ENCODE measurements at regions of chr15 and their contacts with region 1.

Region 1: DNA sequence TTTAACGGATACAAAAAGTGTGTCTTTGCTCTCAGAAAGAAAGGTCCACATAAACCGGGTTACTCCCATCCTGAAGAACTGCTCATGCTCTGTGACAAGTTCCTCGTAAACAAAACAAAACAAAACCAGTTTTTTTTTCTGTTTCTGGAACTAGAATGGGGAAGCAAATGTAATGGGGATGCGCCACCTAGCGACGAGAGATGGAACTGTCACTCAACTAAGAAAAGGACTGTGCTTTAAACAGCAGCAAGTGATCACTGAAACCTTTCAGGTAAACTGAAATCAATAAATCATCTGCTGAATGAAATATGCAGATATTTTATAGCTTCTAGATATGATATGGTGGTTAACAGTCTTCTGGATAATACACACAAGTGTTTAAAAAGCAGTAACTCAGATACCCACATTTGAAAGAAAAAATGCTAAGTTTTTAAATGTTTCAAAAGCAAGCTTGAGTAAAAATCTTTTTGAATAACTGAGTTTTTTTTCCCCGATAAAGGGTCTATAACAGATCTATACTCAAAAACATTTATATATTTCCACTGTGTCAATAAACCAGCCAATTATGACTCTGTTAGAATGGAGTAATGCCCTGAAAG is 10.9 kb downstream of the TM2D3 start:
- DNase-seq: peak; percentile 42
- ATAC-seq: peak; percentile 69; the same call in 1 of the 2 replicates
- H3K4me3 ChIP-seq: no peak overlapping the region
- H3K27ac ChIP-seq: no peak overlapping the region
- H3K4me1 ChIP-seq: peaks cover 0 to 7% of the 10 kb centered on the region in 2 experiments; a peak in 2 of 4 replicates
- H3K27me3 ChIP-seq: no peaks in the 10 kb centered on the region
- CTCF ChIP-seq: peak; percentile 74 to 98 (median 89)
- POLR2A ChIP-seq: no peak
- RAD21 ChIP-seq: peak; percentile 89

Region 2: GRCh38 chr15:101232677-101233076 is 408.6 kb before region 1 on chr15:
- CTCF ChIA-PET with region 1: no interaction called
- POLR2A ChIA-PET with region 1: no interaction called
- RAD21 ChIA-PET with region 1: no interaction called
- intact Hi-C with region 1: no loop called
- DNase-seq: no peak
- ATAC-seq: no peak
- H3K4me3 ChIP-seq: no peak overlapping the region
- H3K27ac ChIP-seq: no peak overlapping the region
- H3K4me1 ChIP-seq: no peaks in the 10 kb centered on the region
- H3K27me3 ChIP-seq: no peaks in the 10 kb centered on the region
- CTCF ChIP-seq: no peak
- POLR2A ChIP-seq: no peak
- RAD21 ChIP-seq: no peak

Region 3: DNA sequence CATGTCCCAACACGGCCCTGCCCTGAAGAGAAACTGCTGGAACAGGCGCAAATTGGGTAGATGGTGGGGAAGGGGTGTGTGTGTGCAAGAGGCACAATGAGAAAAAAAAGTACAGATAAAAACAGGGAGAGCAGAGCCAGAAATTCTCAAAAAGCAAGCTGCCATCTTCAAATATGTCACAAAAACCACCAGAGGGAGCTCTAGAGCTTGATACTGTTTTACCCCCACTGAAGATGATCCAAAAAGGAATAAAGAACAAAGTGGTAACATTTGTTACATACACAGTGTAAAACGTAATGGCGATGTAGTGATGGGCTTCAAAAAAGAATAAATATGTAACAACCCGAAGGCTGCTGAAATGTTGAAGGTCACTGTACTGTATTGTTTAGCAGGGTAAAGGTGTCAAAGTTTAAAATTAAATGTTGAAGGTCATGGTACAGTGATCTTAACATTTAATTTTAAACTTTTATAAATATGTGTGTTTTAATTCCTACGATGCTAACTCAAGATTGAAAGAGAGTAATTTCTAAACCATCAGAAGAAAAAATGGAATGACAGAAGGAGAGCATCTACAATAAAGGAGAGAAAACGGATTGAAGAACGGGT is 352.3 kb before region 1 on chr15:
- CTCF ChIA-PET with region 1: interaction called, 20 read pairs
- POLR2A ChIA-PET with region 1: no interaction called
- RAD21 ChIA-PET with region 1: no interaction called
- intact Hi-C with region 1: loop called (anchors 1 kb)
- DNase-seq: peak; percentile 42
- ATAC-seq: peak; percentile 63
- H3K4me3 ChIP-seq: no peak overlapping the region
- H3K27ac ChIP-seq: no peak overlapping the region
- H3K4me1 ChIP-seq: peaks cover 15 to 30% of the 10 kb centered on the region in 2 experiments
- H3K27me3 ChIP-seq: no peaks in the 10 kb centered on the region
- CTCF ChIP-seq: peak; percentile 41 to 78 (median 64); a peak in 5 of 6 replicates
- POLR2A ChIP-seq: no peak
- RAD21 ChIP-seq: peak; percentile 50

Region 4: GRCh38 chr15:101294731-101295606 is 346.3 kb before region 1 on chr15 and contains the start of gene SNRPA1:
- CTCF ChIA-PET with region 1: interaction called, 20 read pairs
- POLR2A ChIA-PET with region 1: no interaction called
- RAD21 ChIA-PET with region 1: no interaction called
- intact Hi-C with region 1: loop called (anchors 1 kb)
- DNase-seq: peak; percentile 83
- ATAC-seq: peak; percentile 83
- H3K4me3 ChIP-seq: peak within 1 kb of the TSS; percentile 57 to 96
- H3K27ac ChIP-seq: peak within 1 kb of the TSS; percentile 96
- H3K4me1 ChIP-seq: peaks cover 15 to 33% of the 10 kb centered on the region in 2 experiments
- H3K27me3 ChIP-seq: no peaks in the 10 kb centered on the region
- CTCF ChIP-seq: no peak
- POLR2A ChIP-seq: peak; percentile 83
- RAD21 ChIP-seq: no peak
- total RNA-seq, gene SNRPA1: 104 TPM

Region 5: DNA sequence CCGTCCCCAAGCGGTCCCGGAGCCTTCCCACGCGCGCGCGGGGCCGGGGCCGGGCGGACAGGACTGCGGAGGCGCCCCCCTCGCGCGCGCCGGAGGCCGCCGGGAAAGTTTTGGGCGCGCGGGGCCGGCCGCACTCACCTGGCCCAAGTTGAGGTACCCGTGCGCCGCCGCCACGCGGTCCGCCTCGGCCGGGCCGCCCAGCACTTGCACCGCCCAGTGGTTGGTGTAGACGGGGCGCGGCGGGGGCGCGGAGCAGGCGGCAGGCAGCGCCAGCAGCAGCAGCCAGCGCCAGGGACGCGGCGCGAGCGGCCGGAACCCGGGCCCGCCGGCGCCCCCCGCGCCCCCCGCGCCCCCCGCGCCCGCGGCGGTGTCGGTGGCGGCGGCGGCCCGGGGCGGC is 152.0 kb before region 1 on chr15:
- CTCF ChIA-PET with region 1: no interaction called
- POLR2A ChIA-PET with region 1: no interaction called
- RAD21 ChIA-PET with region 1: no interaction called
- intact Hi-C with region 1: loop called (anchors 5 kb)
- DNase-seq: peak; percentile 18
- ATAC-seq: peak; percentile 83
- H3K4me3 ChIP-seq: peak overlapping the region; percentile 55 to 63; a peak in 3 of 4 replicates
- H3K27ac ChIP-seq: peak overlapping the region; percentile 32; the same call in 1 of the 2 replicates
- H3K4me1 ChIP-seq: peaks cover 6 to 25% of the 10 kb centered on the region in 2 experiments; a peak in 3 of 4 replicates
- H3K27me3 ChIP-seq: no peaks in the 10 kb centered on the region
- CTCF ChIP-seq: no peak
- POLR2A ChIP-seq: no peak
- RAD21 ChIP-seq: no peak

Region 6: GRCh38 chr15:101501703-101502373 is 139.4 kb before region 1 on chr15:
- CTCF ChIA-PET with region 1: no interaction called
- POLR2A ChIA-PET with region 1: no interaction called
- RAD21 ChIA-PET with region 1: no interaction called
- intact Hi-C with region 1: loop called (anchors 5 kb)
- DNase-seq: peak; percentile 22
- ATAC-seq: peak; percentile 98
- H3K4me3 ChIP-seq: peak overlapping the region in 1 of 2 experiments; percentile 39; a peak in 3 of 4 replicates
- H3K27ac ChIP-seq: no peak overlapping the region
- H3K4me1 ChIP-seq: peaks cover 0 to 12% of the 10 kb centered on the region in 2 experiments; a peak in 3 of 4 replicates
- H3K27me3 ChIP-seq: no peaks in the 10 kb centered on the region
- CTCF ChIP-seq: peak; percentile 47 to 82 (median 82); a peak in 5 of 6 replicates
- POLR2A ChIP-seq: no peak
- RAD21 ChIP-seq: peak; percentile 63

Region 7: GRCh38 chr15:101551696-101552591 is 89.3 kb before region 1 on chr15:
- CTCF ChIA-PET with region 1: no interaction called
- POLR2A ChIA-PET with region 1: no interaction called
- RAD21 ChIA-PET with region 1: no interaction called
- intact Hi-C with region 1: no loop called
- DNase-seq: no peak
- ATAC-seq: no peak
- H3K4me3 ChIP-seq: no peak overlapping the region
- H3K27ac ChIP-seq: no peak overlapping the region
- H3K4me1 ChIP-seq: peaks cover 0 to 10% of the 10 kb centered on the region in 2 experiments; a peak in 2 of 4 replicates
- H3K27me3 ChIP-seq: peaks cover 12% of the 10 kb centered on the region; the same call in 1 of the 2 replicates
- CTCF ChIP-seq: no peak
- POLR2A ChIP-seq: no peak
- RAD21 ChIP-seq: no peak